ENCODE measurements at regions of chr12 and their contacts with region 1.

Region 1: DNA sequence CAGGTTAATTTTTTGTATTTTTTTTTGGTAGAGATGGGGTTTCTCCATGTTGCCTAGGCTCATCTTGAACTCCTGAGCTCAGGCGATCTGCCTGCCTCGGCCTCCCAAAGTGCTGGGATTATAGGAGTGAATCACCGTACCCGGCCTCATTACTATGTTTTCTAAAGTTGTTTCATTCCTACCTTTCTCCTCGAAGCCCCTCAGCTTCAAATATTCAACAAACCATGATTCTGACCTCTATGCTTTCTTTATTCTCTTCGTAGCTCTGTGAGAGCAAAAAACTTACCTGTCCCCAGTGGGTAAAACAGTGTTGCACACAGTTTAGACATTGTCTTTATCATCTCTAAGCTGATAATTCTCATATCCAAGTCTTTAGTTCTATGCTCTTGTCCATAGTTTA is 26.2 kb upstream of the MDM2 start:
- DNase-seq: no peak
- H3K4me3 ChIP-seq: no peak overlapping the region
- H3K27ac ChIP-seq: no peak overlapping the region
- H3K4me1 ChIP-seq: peaks cover 50% of the 10 kb centered on the region
- CTCF ChIP-seq: no peak

Region 2: DNA sequence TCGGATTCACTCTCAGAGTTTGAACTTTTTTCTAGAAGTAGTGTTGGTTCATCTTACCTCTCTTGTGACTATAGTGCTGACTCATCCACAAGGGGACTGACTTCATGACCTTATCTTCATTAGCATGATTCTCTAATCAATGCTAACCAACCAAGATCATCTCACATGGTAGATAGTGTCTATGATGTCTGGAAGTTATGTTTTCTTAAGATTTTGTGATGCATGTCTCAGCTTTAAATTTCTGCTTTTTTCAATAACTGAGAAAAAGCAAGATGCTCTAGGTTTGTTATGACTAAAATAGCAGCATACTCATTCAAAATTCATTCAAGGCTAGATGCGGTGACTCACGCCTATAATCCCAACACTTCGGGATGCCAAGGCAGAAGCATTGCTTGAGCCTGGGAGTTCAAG is 48.1 kb before region 1 on chr12:
- CTCF ChIA-PET with region 1: no interaction called
- POLR2A ChIA-PET with region 1: no interaction called
- intact Hi-C with region 1: no loop called
- DNase-seq: no peak
- H3K4me3 ChIP-seq: no peak overlapping the region
- H3K27ac ChIP-seq: no peak overlapping the region
- H3K4me1 ChIP-seq: no peaks in the 10 kb centered on the region
- CTCF ChIP-seq: no peak

Region 3: DNA sequence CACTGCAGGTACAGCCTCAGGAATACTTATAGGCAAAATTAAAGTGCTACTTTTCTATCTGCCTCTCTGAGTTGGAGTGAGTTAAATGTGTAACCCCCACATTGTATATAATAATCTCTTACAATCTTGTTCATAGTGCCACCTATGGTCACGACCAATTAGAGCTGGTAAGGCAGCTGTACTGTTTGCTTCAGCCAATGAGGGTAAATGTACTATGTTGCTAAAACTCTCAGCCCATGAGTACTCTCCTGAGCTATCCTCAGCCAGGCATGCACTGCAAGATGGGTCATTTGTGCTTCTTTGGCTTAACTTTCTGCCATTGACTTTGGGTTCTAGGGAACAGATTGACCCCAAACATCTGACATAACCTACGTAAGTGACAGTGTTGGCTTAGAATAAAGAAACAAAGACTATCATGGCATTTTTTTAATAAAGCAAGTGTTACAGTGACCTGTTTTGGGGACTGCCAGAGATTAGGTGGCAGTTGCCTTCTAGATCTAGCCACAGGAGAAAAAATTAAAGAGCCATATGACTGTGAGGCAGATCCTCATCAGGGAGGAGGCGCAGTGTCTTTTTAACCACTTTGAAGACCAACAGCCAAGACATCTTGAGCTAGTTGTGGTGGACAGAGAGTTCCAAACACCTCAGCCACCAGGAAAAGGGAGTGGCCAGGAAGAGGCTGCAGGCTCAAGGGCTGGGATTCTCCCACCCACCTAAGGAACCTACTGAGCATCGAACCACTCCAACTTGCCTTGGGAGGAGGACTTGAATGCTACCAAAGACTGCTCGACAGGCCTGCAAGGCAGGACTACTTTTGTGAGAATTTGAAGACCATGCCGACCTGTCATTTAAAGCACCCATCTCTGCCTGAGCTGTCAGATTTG is 11.5 kb after region 1 on chr12:
- CTCF ChIA-PET with region 1: no interaction called
- POLR2A ChIA-PET with region 1: interaction called, 31 read pairs
- intact Hi-C with region 1: no loop called
- DNase-seq: peak; percentile 87
- H3K4me3 ChIP-seq: no peak overlapping the region
- H3K27ac ChIP-seq: peak overlapping the region; percentile 76
- H3K4me1 ChIP-seq: peaks cover 64% of the 10 kb centered on the region
- CTCF ChIP-seq: peak; percentile 61